Aorta (tissue), 5 donors: ENCODE measurements at regions of chr5 and their contacts with region 1.

Region 1: GRCh38 chr5:141557681-141558136 is 61.1 kb downstream of the DIAPH1 start:
- DNase-seq: peak; percentile 87 to 93
- ATAC-seq: peak; percentile 89
- H3K4me3 ChIP-seq: no peak overlapping the region
- H3K27ac ChIP-seq: peak overlapping the region in 1 of 2 donors; percentile 58
- H3K4me1 ChIP-seq: peaks cover 2% of the 10 kb centered on the region in 2 donors
- H3K27me3 ChIP-seq: no peaks in the 10 kb centered on the region

Region 2: GRCh38 chr5:141320225-141321169 is 237.2 kb before region 1 on chr5 and contains the start of gene TAF7:
- intact Hi-C with region 1: loop called (anchors 2 to 5 kb)
- DNase-seq: peak; percentile 94 to 97
- ATAC-seq: peak; percentile 99
- H3K4me3 ChIP-seq: peak within 1 kb of the TSS; percentile 66 to 87
- H3K27ac ChIP-seq: peak within 1 kb of the TSS; percentile 20 to 78
- H3K4me1 ChIP-seq: peaks cover 0 to 2% of the 10 kb centered on the region in 2 donors
- H3K27me3 ChIP-seq: no peaks in the 10 kb centered on the region
- total RNA-seq, gene TAF7: 59.8 to 79.1 TPM

Region 3: GRCh38 chr5:141412854-141413539 is 144.7 kb before region 1 on chr5 and contains the start of gene PCDHGA10:
- intact Hi-C with region 1: loop called (anchors 5 to 10 kb)
- DNase-seq: peak in 1 of 2 donors; percentile 61
- ATAC-seq: no peak
- H3K4me3 ChIP-seq: no peak within 1 kb of the TSS
- H3K27ac ChIP-seq: no peak within 1 kb of the TSS
- H3K4me1 ChIP-seq: no peaks in the 10 kb centered on the region
- H3K27me3 ChIP-seq: no peaks in the 10 kb centered on the region
- total RNA-seq, gene PCDHGA10: 6.1 to 11.4 TPM

Region 4: DNA sequence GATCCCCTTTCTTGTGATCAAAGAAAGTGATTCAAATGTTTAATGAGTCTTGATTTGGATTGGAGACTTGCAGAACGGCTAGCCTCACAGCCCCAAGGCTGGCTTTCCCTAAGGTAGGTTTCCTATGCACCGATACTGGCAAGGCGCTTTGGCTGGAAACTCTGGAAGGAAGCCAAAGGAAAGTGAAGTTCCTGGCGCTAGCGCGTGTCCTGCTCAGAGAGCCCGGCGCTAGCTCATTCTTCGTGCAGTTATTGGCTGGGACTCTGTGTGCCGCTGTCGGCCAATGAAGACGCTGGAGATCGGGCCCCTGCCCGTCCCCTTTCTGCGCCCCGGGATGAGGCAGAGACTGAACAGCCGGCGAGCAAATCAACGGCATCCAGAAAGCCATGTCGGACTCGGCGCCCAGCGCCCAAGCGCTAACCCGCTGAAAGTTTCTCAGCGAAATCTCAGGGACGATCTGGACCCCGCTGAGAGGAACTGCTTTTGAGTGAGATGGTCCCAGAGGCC is 82.0 kb before region 1 on chr5 and contains the start of gene PCDHGC3:
- intact Hi-C with region 1: loop called in 1 of 2 experiments (anchors 2 kb)
- DNase-seq: peak; percentile 95
- ATAC-seq: peak; percentile 96
- H3K4me3 ChIP-seq: peak within 1 kb of the TSS; percentile 6 to 47
- H3K27ac ChIP-seq: peak within 1 kb of the TSS in 1 of 2 donors; percentile 62
- H3K4me1 ChIP-seq: peaks cover 0 to 9% of the 10 kb centered on the region in 2 donors
- H3K27me3 ChIP-seq: no peaks in the 10 kb centered on the region
- total RNA-seq, gene PCDHGC3: 67.3 to 116 TPM

Region 5: DNA sequence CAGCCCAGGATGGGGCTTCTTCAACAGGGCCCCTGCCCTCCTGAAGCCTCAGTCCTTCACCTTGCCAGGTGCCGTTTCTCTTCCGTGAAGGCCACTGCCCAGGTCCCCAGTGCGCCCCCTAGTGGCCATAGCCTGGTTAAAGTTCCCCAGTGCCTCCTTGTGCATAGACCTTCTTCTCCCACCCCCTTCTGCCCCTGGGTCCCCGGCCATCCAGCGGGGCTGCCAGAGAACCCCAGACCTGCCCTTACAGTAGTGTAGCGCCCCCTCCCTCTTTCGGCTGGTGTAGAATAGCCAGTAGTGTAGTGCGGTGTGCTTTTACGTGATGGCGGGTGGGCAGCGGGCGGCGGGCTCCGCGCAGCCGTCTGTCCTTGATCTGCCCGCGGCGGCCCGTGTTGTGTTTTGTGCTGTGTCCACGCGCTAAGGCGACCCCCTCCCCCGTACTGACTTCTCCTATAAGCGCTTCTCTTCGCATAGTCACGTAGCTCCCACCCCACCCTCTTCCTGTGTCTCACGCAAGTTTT is 45.3 kb before region 1 on chr5:
- intact Hi-C with region 1: loop called in 1 of 2 experiments (anchors 2 kb)
- DNase-seq: peak; percentile 92 to 95
- ATAC-seq: peak; percentile 45
- H3K4me3 ChIP-seq: peak overlapping the region; percentile 50 to 71
- H3K27ac ChIP-seq: peak overlapping the region; percentile 19 to 43
- H3K4me1 ChIP-seq: peaks cover 2 to 14% of the 10 kb centered on the region in 2 donors
- H3K27me3 ChIP-seq: no peaks in the 10 kb centered on the region

Region 6: DNA sequence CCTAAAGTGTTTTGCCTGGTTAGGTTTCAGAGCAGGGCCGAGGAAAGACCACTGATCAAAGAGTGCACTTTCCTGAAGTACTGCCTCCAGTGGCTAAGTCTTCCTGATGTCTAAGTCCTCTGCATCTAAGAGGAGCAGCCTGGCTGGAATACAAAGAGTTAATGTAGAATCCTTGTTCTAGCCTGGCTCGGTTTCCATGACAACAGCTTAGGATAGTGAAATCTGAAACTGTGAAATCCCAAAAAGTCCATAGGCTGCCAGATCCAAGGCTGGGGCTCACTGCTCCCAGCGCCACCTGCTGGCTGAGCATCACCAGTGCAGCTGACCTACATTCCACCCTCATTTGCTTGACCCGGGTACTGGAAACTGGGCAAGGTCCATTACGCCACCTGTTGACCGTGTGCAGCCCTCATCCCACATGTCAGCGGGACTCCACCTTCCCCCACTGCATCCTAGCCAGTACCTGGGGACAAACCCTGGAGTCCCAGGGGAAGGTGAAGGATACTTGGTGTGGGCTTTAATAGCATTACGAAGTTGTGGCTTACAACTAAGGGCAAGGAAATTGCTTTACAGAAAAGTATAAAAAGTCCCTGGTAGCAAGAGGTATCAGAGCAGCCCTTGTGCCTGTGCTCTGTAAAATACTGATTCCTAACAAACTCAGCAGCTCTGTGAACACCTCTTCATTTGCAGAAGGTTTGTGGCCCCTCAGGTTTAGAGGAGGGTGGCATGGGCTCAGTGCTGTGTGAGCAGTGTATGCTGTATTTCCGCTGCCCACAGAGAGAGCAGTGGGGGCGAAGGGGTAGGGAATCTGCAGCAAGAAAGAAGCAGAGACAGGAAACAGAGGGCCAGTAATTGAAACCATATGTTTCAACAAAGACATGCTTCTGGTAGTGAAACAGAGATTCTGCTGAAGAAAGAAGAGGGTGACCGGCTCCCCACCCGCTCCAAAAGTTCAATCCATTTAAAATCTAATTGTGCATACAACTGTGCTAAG is 32.8 kb before region 1 on chr5:
- intact Hi-C with region 1: loop called (anchors 2 to 5 kb)
- DNase-seq: peak; percentile 86 to 93
- ATAC-seq: peak; percentile 95
- H3K4me3 ChIP-seq: no peak overlapping the region
- H3K27ac ChIP-seq: peak overlapping the region; percentile 29 to 63
- H3K4me1 ChIP-seq: no peaks in the 10 kb centered on the region
- H3K27me3 ChIP-seq: no peaks in the 10 kb centered on the region

Region 7: GRCh38 chr5:141605523-141606277 is 48.0 kb after region 1 on chr5:
- intact Hi-C with region 1: no loop called
- DNase-seq: peak in 1 of 2 donors; percentile 68
- ATAC-seq: peak; percentile 77
- H3K4me3 ChIP-seq: no peak overlapping the region
- H3K27ac ChIP-seq: peak overlapping the region; percentile 67 to 77
- H3K4me1 ChIP-seq: no peaks in the 10 kb centered on the region
- H3K27me3 ChIP-seq: no peaks in the 10 kb centered on the region